Caco-2 (cell line): ENCODE measurements at regions of chr1 and their contacts with region 1.

Region 1: DNA sequence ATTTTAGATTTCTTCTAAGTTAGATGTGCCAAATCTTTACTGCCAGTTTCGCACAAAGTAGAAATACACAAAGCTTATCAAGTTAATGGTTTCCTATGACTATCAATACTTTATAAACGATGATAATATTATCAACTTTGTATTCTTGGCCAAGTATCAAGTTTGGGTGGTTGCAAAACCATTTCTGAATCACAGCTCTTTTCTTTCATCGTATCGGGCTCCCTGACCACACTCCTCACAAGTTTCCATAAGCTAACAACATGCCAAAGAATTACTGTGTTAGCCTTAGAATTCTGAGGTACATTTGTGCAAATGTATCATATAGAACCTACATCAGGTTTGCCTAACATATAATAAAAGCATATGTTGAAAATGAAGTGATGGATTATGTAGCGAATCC is 311.0 kb downstream of the KCTD3 start:
- DNase-seq: no peak
- H3K4me3 ChIP-seq: no peak overlapping the region
- H3K4me3 Mint-ChIP-seq: no peak overlapping the region
- H3K27ac Mint-ChIP-seq: no peak overlapping the region
- H3K4me1 ChIP-seq: peaks cover 20% of the 10 kb centered on the region
- H3K4me1 Mint-ChIP-seq: peaks cover 23% of the 10 kb centered on the region
- H3K27me3 ChIP-seq: no peaks in the 10 kb centered on the region
- H3K27me3 Mint-ChIP-seq: no peaks in the 10 kb centered on the region
- CTCF ChIP-seq: no peak

Region 2: GRCh38 chr1:214923278-214923915 is 954.7 kb before region 1 on chr1:
- CTCF ChIA-PET with region 1: no interaction called
- POLR2A ChIA-PET with region 1: no interaction called
- intact Hi-C with region 1: no loop called
- DNase-seq: no peak
- H3K4me3 ChIP-seq: no peak overlapping the region
- H3K4me3 Mint-ChIP-seq: no peak overlapping the region
- H3K27ac Mint-ChIP-seq: no peak overlapping the region
- H3K4me1 ChIP-seq: no peaks in the 10 kb centered on the region
- H3K4me1 Mint-ChIP-seq: peaks cover 10% of the 10 kb centered on the region
- H3K27me3 ChIP-seq: no peaks in the 10 kb centered on the region
- H3K27me3 Mint-ChIP-seq: no peaks in the 10 kb centered on the region
- CTCF ChIP-seq: no peak

Region 3: DNA sequence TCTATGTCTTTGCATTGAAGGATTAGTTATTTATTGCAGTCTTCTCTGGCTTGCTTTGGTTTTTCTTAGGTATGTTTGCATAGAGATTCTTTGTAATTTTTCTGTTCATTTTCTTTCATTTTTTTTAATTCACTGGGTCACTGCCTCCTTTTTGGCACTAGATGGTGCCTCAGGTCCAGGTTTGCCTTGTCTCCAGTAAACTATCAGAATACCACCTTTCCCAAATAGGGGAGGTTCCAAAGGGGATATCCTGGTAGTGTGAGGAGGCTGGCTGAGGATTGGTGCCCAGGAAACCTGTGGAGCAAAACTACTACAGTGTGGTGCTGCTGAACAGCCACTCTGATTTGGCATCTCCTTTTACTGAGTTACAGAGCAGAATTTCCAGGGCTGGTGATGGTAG is 53.9 kb before region 1 on chr1:
- CTCF ChIA-PET with region 1: no interaction called
- POLR2A ChIA-PET with region 1: no interaction called
- intact Hi-C with region 1: loop called (anchors 5 kb)
- DNase-seq: peak in 1 of 2 experiments; percentile 24
- H3K4me3 ChIP-seq: no peak overlapping the region
- H3K4me3 Mint-ChIP-seq: no peak overlapping the region
- H3K27ac Mint-ChIP-seq: no peak overlapping the region
- H3K4me1 ChIP-seq: no peaks in the 10 kb centered on the region
- H3K4me1 Mint-ChIP-seq: no peaks in the 10 kb centered on the region
- H3K27me3 ChIP-seq: no peaks in the 10 kb centered on the region
- H3K27me3 Mint-ChIP-seq: no peaks in the 10 kb centered on the region
- CTCF ChIP-seq: peak; percentile 32 to 73

Region 4: GRCh38 chr1:215865060-215865459 is 13.1 kb before region 1 on chr1:
- CTCF ChIA-PET with region 1: no interaction called
- POLR2A ChIA-PET with region 1: no interaction called
- intact Hi-C with region 1: loop called (anchors 1 kb)
- DNase-seq: peak; percentile 51 to 69
- H3K4me3 ChIP-seq: no peak overlapping the region
- H3K4me3 Mint-ChIP-seq: peak overlapping the region; percentile 22
- H3K27ac Mint-ChIP-seq: peak overlapping the region; percentile 60
- H3K4me1 ChIP-seq: peaks cover 52% of the 10 kb centered on the region
- H3K4me1 Mint-ChIP-seq: peaks cover 24% of the 10 kb centered on the region
- H3K27me3 ChIP-seq: no peaks in the 10 kb centered on the region
- H3K27me3 Mint-ChIP-seq: no peaks in the 10 kb centered on the region
- CTCF ChIP-seq: no peak

Region 5: GRCh38 chr1:215932558-215932957 is 54.4 kb after region 1 on chr1:
- CTCF ChIA-PET with region 1: no interaction called
- POLR2A ChIA-PET with region 1: no interaction called
- intact Hi-C with region 1: loop called (anchors 5 kb)
- DNase-seq: peak; percentile 51 to 61
- H3K4me3 ChIP-seq: no peak overlapping the region
- H3K4me3 Mint-ChIP-seq: no peak overlapping the region
- H3K27ac Mint-ChIP-seq: peak overlapping the region; percentile 79
- H3K4me1 ChIP-seq: peaks cover 17% of the 10 kb centered on the region
- H3K4me1 Mint-ChIP-seq: no peaks in the 10 kb centered on the region
- H3K27me3 ChIP-seq: no peaks in the 10 kb centered on the region
- H3K27me3 Mint-ChIP-seq: no peaks in the 10 kb centered on the region
- CTCF ChIP-seq: no peak

Region 6: DNA sequence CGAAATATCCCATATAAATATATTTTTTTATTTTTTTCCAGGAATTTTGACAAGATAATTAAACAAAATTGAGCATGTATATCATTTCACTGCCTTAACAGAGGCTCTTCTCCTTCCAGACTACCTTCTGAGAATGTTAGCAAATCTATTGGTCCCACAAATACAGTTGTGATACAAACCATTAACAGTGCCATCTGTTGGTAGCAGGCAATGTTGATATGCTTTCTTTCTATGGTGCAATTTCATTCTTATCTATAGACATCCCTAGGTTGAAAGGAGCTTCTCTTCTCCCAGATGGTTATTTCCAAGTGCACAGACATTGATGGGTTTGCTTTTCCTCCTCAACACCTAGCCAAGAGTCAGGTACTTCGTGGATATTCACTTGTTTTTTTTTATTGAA is 241.5 kb after region 1 on chr1:
- CTCF ChIA-PET with region 1: no interaction called
- POLR2A ChIA-PET with region 1: no interaction called
- intact Hi-C with region 1: no loop called
- DNase-seq: peak in 1 of 2 experiments; percentile 36
- H3K4me3 ChIP-seq: no peak overlapping the region
- H3K4me3 Mint-ChIP-seq: no peak overlapping the region
- H3K27ac Mint-ChIP-seq: no peak overlapping the region
- H3K4me1 ChIP-seq: no peaks in the 10 kb centered on the region
- H3K4me1 Mint-ChIP-seq: no peaks in the 10 kb centered on the region
- H3K27me3 ChIP-seq: no peaks in the 10 kb centered on the region
- H3K27me3 Mint-ChIP-seq: no peaks in the 10 kb centered on the region
- CTCF ChIP-seq: peak; percentile 53 to 61